Transverse colon (tissue), 4 donors: ENCODE measurements at regions of chr15 and their contacts with region 1.

Region 1: DNA sequence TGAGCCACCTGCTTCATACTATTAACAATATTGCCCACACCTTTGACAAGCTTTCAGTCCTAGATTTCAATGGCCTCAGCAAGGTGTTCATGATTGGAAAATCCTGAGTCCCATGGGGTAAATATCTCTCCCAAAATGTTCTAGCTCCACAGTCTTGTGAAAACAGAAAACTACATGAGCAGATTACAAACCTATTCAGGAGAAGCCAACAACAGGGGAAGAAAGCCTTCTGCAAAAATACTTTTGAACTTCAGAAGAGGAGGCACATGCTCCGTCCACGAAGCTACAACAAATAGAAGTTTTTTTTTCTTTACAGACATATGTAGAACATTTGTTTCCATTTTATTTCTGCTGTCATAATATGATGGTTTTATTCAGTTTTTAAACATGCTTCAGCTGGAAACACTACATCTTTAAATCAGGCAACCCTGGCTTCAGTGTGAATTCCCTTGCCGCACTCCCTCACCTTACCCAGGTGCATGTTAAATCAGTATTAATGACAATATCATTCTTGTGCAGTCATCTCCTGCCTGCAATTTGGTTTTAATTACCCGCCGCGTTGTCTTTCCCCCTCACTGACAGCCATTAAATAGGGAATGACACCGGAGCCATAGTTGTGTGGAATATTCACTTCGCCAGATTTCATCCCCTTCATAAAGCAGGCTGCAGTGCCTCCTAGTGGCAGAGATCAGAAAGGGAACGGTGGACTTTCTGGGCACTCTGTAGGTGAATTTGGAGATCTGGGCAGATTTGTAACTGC is 725.5 kb upstream of the ARRDC4 start:
- DNase-seq: peak; percentile 46
- H3K4me3 ChIP-seq: no peak overlapping the region
- H3K27ac ChIP-seq: no peak overlapping the region
- H3K4me1 ChIP-seq: peaks cover 0 to 6% (median 0%) of the 10 kb centered on the region in 4 donors
- H3K27me3 ChIP-seq: no peaks in the 10 kb centered on the region
- CTCF ChIP-seq: peak; percentile 75 to 85 (median 79)
- EP300 ChIP-seq: no peak
- POLR2A ChIP-seq: no peak

Region 2: GRCh38 chr15:95259513-95259912 is 1975.5 kb before region 1 on chr15:
- in situ Hi-C with region 1: loop called (anchors 10 to 25 kb)
- intact Hi-C with region 1: no loop called
- DNase-seq: peak; percentile 49
- H3K4me3 ChIP-seq: no peak overlapping the region
- H3K27ac ChIP-seq: no peak overlapping the region
- H3K4me1 ChIP-seq: peaks cover 0 to 7% (median 3%) of the 10 kb centered on the region in 4 donors
- H3K27me3 ChIP-seq: no peaks in the 10 kb centered on the region
- CTCF ChIP-seq: peak; percentile 62 to 70 (median 68)
- EP300 ChIP-seq: no peak
- POLR2A ChIP-seq: no peak

Region 3: DNA sequence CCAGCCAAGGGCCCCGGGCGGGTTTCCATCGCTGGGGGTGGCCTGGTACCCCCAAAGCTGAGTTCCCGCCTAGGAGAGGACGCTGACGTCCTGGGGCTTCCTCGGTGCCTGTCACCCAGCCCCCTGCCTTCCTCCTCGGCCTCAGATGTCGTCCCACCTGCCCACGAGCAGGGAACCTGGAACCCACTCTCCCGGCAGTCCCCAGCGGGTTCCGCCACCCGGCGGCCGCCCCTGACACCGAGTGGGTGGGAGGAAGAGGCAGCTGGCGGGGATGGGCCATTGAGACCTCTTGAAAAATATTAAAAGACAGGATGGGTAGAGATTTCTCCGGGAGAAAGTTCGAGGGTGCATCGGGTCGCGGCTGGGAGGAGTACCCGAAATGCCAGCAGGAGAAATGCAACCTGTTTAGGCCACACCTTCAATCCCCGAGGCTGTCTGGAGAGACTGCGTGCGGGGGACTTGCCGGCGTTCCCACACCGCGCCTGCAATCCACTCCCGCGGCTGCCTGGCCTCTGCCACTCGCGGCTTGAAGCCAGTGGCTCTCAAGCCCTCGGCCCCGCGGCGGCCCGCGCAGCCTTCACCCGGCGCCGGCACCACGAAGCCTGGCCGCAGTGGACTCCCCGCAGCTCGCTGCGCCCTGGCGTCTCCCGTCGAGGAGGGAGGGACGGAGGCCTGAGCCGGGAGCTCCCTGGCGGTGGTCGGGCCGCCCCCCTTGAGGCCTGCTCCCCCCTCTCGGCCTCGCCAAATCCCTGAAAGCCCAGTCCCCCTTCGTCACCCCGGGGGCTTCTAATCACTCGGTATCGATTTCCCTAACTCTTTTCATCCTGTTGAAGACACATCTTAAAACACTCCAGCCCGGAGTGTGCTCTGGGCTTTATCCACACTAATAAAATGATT is 913.1 kb before region 1 on chr15:
- in situ Hi-C with region 1: loop called in 1 of 4 experiments (anchors 25 kb)
- intact Hi-C with region 1: no loop called
- DNase-seq: no peak
- H3K4me3 ChIP-seq: peak overlapping the region; percentile 22 to 48 (median 34)
- H3K27ac ChIP-seq: peak overlapping the region; percentile 81 to 91 (median 88)
- H3K4me1 ChIP-seq: peaks cover 0 to 44% (median 10%) of the 10 kb centered on the region in 4 donors
- H3K27me3 ChIP-seq: peaks cover 99% of the 10 kb centered on the region
- CTCF ChIP-seq: no peak
- EP300 ChIP-seq: no peak
- POLR2A ChIP-seq: no peak